Heart right ventricle (tissue), 16 donors: ENCODE measurements at regions of chr15 and their contacts with region 1.

Region 1: GRCh38 chr15:79028411-79028964 is 62.1 kb downstream of the RASGRF1 start:
- DNase-seq: peak in 1 of 2 donors; percentile 38
- ATAC-seq: peak in 2 of 8 donors; percentile 25 to 35
- H3K4me3 ChIP-seq: no peak overlapping the region
- H3K27ac ChIP-seq: no peak overlapping the region
- H3K4me1 ChIP-seq: peaks cover 0 to 3% (median 0%) of the 10 kb centered on the region in 9 donors
- H3K27me3 ChIP-seq: peaks cover 0 to 4% (median 0%) of the 10 kb centered on the region in 7 donors
- CTCF ChIP-seq: peak; percentile 62 to 85 (median 77)

Region 2: DNA sequence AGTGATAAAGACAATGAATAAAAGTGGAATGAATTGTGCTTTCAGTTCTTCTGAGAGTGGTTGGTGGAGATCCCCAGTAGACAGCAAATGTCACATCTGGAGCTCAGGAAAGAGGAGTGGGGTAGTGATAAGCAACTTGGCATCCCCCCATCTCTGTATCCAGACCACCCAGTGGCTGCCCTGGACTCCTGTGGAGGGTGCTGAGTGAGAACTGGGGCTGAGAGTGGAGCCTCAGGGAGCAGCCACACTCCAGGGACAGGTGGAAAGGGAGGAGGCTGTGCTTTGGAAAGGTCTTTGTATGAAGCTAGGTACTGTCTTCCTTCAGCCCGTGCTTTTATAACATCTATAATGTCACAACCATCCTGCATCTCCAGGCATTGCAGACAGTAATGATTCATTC is 147.7 kb after region 1 on chr15:
- intact Hi-C with region 1: loop called in 1 of 10 experiments (anchors 2 kb)
- DNase-seq: no peak
- ATAC-seq: no peak
- H3K4me3 ChIP-seq: no peak overlapping the region
- H3K27ac ChIP-seq: no peak overlapping the region
- H3K4me1 ChIP-seq: peaks cover 2 to 11% (median 7%) of the 10 kb centered on the region in 9 donors
- H3K27me3 ChIP-seq: peaks cover 0 to 15% (median 0%) of the 10 kb centered on the region in 7 donors
- CTCF ChIP-seq: no peak

Region 3: GRCh38 chr15:79184465-79184892 is 156.0 kb after region 1 on chr15:
- intact Hi-C with region 1: loop called (anchors 1 to 2 kb)
- DNase-seq: peak; percentile 67 to 75
- ATAC-seq: peak in 3 of 8 donors; percentile 38 to 82 (median 55)
- H3K4me3 ChIP-seq: no peak overlapping the region
- H3K27ac ChIP-seq: no peak overlapping the region
- H3K4me1 ChIP-seq: no peaks in the 10 kb centered on the region
- H3K27me3 ChIP-seq: peaks cover 0 to 20% (median 0%) of the 10 kb centered on the region in 7 donors
- CTCF ChIP-seq: peak; percentile 89 to 99 (median 97)